HCT116 (cell line): ENCODE measurements at regions of chr12 and their contacts with region 1.

Region 1: DNA sequence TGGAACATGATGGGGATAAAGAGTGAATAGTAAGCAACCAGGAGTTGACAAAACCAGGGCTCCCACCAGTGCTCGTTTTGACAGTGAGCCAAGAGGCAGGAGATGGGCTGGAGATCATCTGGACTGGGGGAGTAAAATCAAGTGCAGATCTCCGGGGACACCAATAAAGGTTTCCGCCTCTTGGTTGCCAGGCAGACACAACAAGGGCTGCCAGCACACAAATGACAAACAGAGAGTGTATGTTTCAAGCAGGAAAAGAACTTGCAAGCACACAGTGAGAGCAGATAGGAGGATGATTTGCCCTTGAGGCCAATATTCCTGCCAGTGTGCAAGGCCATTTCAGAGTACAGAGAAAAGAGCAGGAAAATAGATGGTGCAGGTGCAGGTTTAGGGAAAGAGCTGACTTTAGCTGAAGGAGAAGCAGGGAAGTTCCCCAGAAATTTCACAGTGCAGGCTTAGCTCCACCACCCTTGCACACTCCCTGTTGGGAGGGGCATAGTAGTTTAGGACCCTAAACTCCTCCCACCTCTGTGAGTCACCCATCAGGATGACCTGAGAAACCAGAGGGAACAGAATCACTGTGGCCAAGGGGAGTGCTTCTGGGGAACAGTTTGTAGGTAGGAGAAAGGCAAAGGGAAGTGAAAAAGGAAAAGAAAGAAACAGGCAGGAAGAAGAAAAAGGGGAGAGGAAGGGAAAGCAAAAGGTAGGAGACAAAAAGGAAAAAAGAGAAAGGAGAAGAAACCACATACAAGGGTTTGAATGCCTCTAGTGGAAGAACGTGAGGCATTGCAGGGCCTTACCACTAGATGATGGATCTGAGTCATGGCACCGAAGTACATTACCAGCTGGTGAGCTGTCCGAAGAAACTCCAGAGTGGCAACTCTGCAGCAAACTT is 404.4 kb downstream of the SLC6A15 start:
- DNase-seq: peak; percentile 57
- ATAC-seq: peak; percentile 96
- H3K4me3 ChIP-seq: no peak overlapping the region; a peak in 1 of 4 replicates
- H3K27ac ChIP-seq: no peak overlapping the region
- H3K4me1 ChIP-seq: peaks cover 0 to 14% of the 10 kb centered on the region in 2 experiments; a peak in 2 of 4 replicates
- H3K27me3 ChIP-seq: no peaks in the 10 kb centered on the region
- CTCF ChIP-seq: peak in 2 of 3 experiments; percentile 60 to 61; a peak in 4 of 6 replicates
- POLR2A ChIP-seq: no peak
- RAD21 ChIP-seq: peak; percentile 35; the same call in 1 of the 2 replicates

Region 2: DNA sequence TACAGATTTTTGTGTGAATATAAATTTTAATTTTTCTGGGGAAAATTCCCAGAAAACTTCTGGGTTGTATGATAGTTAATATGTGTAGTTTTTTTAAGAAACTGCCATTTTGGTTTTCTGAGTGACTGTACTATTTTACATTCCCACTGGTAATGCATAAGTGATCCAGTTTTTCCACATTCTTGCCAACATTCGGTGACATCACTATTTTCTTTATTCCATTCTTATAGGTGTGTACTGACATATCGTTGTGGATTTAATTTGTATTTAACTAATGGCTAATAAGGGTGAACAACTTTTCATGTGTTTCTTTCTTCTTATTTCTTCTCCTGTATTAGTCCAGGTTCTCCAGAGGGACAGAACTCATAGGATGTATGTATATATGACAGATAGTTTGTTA is 57.7 kb before region 1 on chr12:
- CTCF ChIA-PET with region 1: no interaction called
- POLR2A ChIA-PET with region 1: no interaction called
- RAD21 ChIA-PET with region 1: no interaction called
- intact Hi-C with region 1: no loop called
- DNase-seq: no peak
- ATAC-seq: no peak
- H3K4me3 ChIP-seq: no peak overlapping the region
- H3K27ac ChIP-seq: no peak overlapping the region
- H3K4me1 ChIP-seq: no peaks in the 10 kb centered on the region
- H3K27me3 ChIP-seq: no peaks in the 10 kb centered on the region
- CTCF ChIP-seq: no peak
- POLR2A ChIP-seq: no peak
- RAD21 ChIP-seq: no peak

Region 3: GRCh38 chr12:84497819-84498218 is 10.4 kb before region 1 on chr12:
- CTCF ChIA-PET with region 1: interaction called, 12 read pairs
- POLR2A ChIA-PET with region 1: no interaction called
- RAD21 ChIA-PET with region 1: no interaction called
- intact Hi-C with region 1: no loop called
- DNase-seq: peak; percentile 16
- ATAC-seq: peak; percentile 54
- H3K4me3 ChIP-seq: no peak overlapping the region
- H3K27ac ChIP-seq: no peak overlapping the region
- H3K4me1 ChIP-seq: peaks cover 0 to 12% of the 10 kb centered on the region in 2 experiments; a peak in 2 of 4 replicates
- H3K27me3 ChIP-seq: no peaks in the 10 kb centered on the region
- CTCF ChIP-seq: peak; percentile 32 to 58 (median 49); a peak in 5 of 6 replicates
- POLR2A ChIP-seq: no peak
- RAD21 ChIP-seq: peak; percentile 42; the same call in 1 of the 2 replicates

Region 4: DNA sequence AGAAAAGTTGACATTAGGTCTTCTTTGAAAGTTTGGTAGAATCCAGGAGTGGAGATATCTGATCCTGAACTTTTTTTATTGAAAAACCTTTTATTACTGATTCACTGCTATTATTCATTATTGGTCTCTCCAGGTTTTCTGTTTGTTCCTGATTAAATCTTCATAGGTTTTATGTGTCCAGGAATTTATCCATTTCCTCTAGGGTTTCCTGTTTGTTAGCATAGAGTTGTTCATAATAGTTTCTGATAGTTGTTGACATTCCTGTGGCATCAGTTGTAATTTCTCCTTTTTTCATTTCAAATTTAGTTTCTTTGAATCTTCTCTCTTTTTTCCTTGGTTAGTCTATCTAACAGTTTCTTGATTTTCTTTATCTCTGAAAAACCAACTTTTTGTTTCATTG is 34.1 kb after region 1 on chr12:
- CTCF ChIA-PET with region 1: no interaction called
- POLR2A ChIA-PET with region 1: no interaction called
- RAD21 ChIA-PET with region 1: no interaction called
- intact Hi-C with region 1: no loop called
- DNase-seq: no peak
- ATAC-seq: no peak
- H3K4me3 ChIP-seq: no peak overlapping the region
- H3K27ac ChIP-seq: no peak overlapping the region
- H3K4me1 ChIP-seq: no peaks in the 10 kb centered on the region
- H3K27me3 ChIP-seq: no peaks in the 10 kb centered on the region
- CTCF ChIP-seq: no peak
- POLR2A ChIP-seq: no peak
- RAD21 ChIP-seq: no peak